CD4-positive, alpha-beta T cell (primary cell): ENCODE measurements at regions of chr1 and their contacts with region 1.

Region 1: DNA sequence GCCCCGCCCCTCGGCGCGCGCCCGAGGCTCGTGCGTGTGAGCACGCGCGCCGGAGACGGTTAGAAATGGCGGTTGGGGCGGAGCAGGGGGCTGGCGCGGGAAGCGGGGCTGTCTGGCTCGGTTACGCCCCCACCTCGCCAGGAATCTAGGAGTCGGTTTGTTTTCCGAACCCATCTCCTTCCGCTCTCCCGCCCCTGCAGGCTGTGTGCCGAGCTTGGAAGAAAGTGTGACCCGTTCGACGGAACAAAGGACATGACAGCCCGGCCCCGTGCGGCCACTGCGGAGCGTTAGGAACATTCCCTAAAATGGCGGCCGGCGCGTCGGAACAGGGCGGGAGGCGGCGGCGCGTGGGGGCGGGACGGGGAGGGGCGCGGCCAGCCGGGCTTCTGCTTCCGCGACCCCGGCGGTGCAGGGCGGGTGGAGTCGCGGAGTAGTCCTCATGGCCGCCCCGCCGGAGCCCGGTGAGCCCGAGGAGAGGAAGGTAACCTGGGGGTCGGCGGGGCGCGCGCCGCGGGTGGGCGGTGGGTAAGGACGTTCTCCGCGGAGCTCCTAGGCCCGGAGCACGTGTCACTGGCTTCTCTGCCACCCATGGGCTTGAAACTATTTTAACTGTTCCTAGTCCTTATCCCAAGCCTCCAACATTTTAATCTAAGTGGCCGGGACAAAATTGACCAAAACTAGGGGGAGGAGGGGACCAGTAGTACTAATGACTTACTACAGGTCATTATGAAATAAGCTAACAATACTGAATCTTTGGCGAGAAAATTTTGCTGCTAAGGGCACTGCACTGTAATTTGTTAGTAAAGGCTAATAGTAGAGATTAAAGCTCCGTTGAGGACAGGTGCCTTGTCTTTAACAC is at the start of gene COX20:
- DNase-seq: peak; percentile 79 to 95 (median 87)
- ATAC-seq: peak; percentile 55
- H3K4me3 ChIP-seq: peak within 1 kb of the TSS; percentile 87
- H3K4me3 Mint-ChIP-seq: peak within 1 kb of the TSS; percentile 98
- H3K27ac ChIP-seq: peak within 1 kb of the TSS; percentile 97 to 98
- H3K27ac Mint-ChIP-seq: peak within 1 kb of the TSS; percentile 99
- H3K4me1 ChIP-seq: peaks cover 18% of the 10 kb centered on the region
- H3K4me1 Mint-ChIP-seq: peaks cover 53% of the 10 kb centered on the region
- H3K27me3 ChIP-seq: no peaks in the 10 kb centered on the region
- H3K27me3 Mint-ChIP-seq: no peaks in the 10 kb centered on the region
- CTCF ChIP-seq: no peak
- total RNA-seq, gene COX20: 14.5 to 16.8 TPM

Region 2: DNA sequence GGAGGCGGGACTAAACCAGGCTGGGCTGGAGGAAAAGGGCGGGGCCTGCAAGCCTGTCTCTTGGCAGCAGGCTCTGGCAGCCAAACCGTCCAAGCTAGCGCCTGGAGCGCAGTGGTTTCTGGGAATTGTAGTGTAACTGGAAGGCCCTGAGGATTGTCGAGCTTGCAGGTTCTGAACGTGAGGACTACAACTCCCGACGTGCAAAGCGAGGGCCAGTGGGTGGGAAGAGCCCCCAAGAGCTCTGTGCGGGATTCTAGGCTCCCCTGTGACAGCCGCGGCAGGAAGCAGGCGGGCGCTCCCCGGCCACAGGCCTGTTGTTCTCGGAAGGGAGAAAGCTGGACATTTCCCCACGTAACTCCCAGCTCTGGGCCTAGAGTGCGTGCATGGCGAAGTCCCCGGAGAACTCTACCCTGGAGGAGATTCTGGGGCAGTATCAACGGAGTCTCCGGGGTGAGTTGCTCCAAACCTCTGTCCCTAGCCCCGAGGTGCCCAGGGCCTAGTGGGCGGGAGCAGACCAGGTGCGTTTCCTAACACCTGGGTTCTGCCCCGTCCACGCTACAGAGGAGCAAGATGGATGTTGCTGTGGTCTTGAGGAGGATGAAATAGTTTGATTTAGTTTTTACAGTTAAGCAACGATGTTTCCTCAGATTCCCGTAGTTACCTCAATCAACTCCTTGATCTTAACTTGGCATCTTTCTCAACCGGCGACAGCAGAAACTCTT is 1579.6 kb before region 1 on chr1 and contains the start of gene SDCCAG8:
- CTCF ChIA-PET with region 1: no interaction called
- POLR2A ChIA-PET with region 1: interaction called, 22 read pairs
- intact Hi-C with region 1: loop called in 1 of 2 experiments (anchors 10 kb)
- DNase-seq: peak; percentile 85 to 98 (median 90)
- ATAC-seq: peak; percentile 73
- H3K4me3 ChIP-seq: peak within 1 kb of the TSS; percentile 99
- H3K4me3 Mint-ChIP-seq: peak within 1 kb of the TSS; percentile 98
- H3K27ac ChIP-seq: peak within 1 kb of the TSS; percentile 97 to 99
- H3K27ac Mint-ChIP-seq: peak within 1 kb of the TSS; percentile 100
- H3K4me1 ChIP-seq: peaks cover 20% of the 10 kb centered on the region
- H3K4me1 Mint-ChIP-seq: peaks cover 61% of the 10 kb centered on the region
- H3K27me3 ChIP-seq: no peaks in the 10 kb centered on the region
- H3K27me3 Mint-ChIP-seq: no peaks in the 10 kb centered on the region
- CTCF ChIP-seq: no peak
- total RNA-seq, gene SDCCAG8: 18.3 to 21.2 TPM

Region 3: GRCh38 chr1:244451951-244452795 is 383.3 kb before region 1 on chr1:
- CTCF ChIA-PET with region 1: no interaction called
- POLR2A ChIA-PET with region 1: interaction called, 9 read pairs
- intact Hi-C with region 1: loop called in 1 of 2 experiments (anchors 10 kb)
- DNase-seq: peak; percentile 97 to 100 (median 99)
- ATAC-seq: peak; percentile 83
- H3K4me3 ChIP-seq: peak overlapping the region; percentile 86
- H3K4me3 Mint-ChIP-seq: peak overlapping the region; percentile 93
- H3K27ac ChIP-seq: peak overlapping the region; percentile 16 to 96
- H3K27ac Mint-ChIP-seq: peak overlapping the region; percentile 98
- H3K4me1 ChIP-seq: peaks cover 15% of the 10 kb centered on the region
- H3K4me1 Mint-ChIP-seq: peaks cover 42% of the 10 kb centered on the region
- H3K27me3 ChIP-seq: no peaks in the 10 kb centered on the region
- H3K27me3 Mint-ChIP-seq: no peaks in the 10 kb centered on the region
- CTCF ChIP-seq: peak; percentile 45

Region 4: GRCh38 chr1:244652699-244653466 is 182.6 kb before region 1 on chr1 and contains the start of gene DESI2:
- CTCF ChIA-PET with region 1: no interaction called
- POLR2A ChIA-PET with region 1: interaction called, 39 read pairs
- intact Hi-C with region 1: loop called (anchors 1 to 5 kb)
- DNase-seq: peak; percentile 95 to 100 (median 97)
- ATAC-seq: peak; percentile 92
- H3K4me3 ChIP-seq: peak within 1 kb of the TSS; percentile 80
- H3K4me3 Mint-ChIP-seq: peak within 1 kb of the TSS; percentile 88
- H3K27ac ChIP-seq: peak within 1 kb of the TSS; percentile 53 to 74
- H3K27ac Mint-ChIP-seq: peak within 1 kb of the TSS; percentile 83
- H3K4me1 ChIP-seq: peaks cover 23% of the 10 kb centered on the region
- H3K4me1 Mint-ChIP-seq: peaks cover 21% of the 10 kb centered on the region
- H3K27me3 ChIP-seq: no peaks in the 10 kb centered on the region
- H3K27me3 Mint-ChIP-seq: no peaks in the 10 kb centered on the region
- CTCF ChIP-seq: peak; percentile 46
- total RNA-seq, gene DESI2: 12.9 to 13.7 TPM

Region 5: DNA sequence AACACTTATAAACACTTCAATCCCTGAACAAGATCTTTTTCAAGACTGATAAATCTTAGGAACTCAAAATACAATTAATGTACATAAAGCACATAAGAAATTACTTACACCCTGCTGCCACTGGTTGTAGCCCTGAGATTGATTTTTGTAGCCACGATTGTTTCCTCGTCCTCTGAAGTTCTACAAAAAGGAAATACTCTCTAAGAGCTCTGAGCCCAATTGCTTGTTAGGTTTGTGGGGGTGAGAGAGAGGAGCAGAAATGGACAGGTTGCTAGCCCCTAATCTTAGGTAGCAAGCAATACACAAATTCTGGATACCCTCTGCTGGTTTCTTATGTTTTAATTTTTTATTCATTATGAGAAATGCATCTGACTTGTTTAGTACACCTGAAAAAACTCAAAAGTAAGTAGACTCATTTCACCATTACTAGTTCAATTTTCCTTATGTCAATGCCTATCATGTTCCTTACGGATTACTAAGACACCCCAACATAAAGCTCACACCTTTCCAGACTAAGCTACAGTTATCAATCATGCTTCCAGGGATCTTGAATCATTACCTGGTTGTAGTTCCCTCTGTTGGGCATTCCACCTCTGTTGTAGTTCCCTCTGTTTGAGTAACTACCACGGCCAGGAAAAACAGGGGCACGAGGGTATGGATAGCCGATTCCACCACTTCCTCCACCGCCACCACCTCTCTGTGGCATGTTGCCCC is 19.5 kb after region 1 on chr1:
- CTCF ChIA-PET with region 1: interaction called, 14 read pairs
- POLR2A ChIA-PET with region 1: interaction called, 1,262 read pairs
- intact Hi-C with region 1: no loop called
- DNase-seq: peak in 1 of 14 experiments; percentile 29
- ATAC-seq: peak; percentile 31
- H3K4me3 ChIP-seq: no peak overlapping the region
- H3K4me3 Mint-ChIP-seq: peak overlapping the region; percentile 40
- H3K27ac ChIP-seq: peak overlapping the region; percentile 13 to 50
- H3K27ac Mint-ChIP-seq: peak overlapping the region; percentile 78
- H3K4me1 ChIP-seq: peaks cover 30% of the 10 kb centered on the region
- H3K4me1 Mint-ChIP-seq: peaks cover 99% of the 10 kb centered on the region
- H3K27me3 ChIP-seq: no peaks in the 10 kb centered on the region
- H3K27me3 Mint-ChIP-seq: no peaks in the 10 kb centered on the region
- CTCF ChIP-seq: no peak

Region 6: GRCh38 chr1:244918421-244919319 is 83.2 kb after region 1 on chr1:
- CTCF ChIA-PET with region 1: interaction called, 3 read pairs
- POLR2A ChIA-PET with region 1: interaction called, 26 read pairs
- intact Hi-C with region 1: loop called (anchors 1 to 2 kb)
- DNase-seq: peak; percentile 22 to 91 (median 66)
- ATAC-seq: peak; percentile 98
- H3K4me3 ChIP-seq: peak overlapping the region; percentile 55
- H3K4me3 Mint-ChIP-seq: peak overlapping the region; percentile 90
- H3K27ac ChIP-seq: no peak overlapping the region
- H3K27ac Mint-ChIP-seq: peak overlapping the region; percentile 56
- H3K4me1 ChIP-seq: peaks cover 7% of the 10 kb centered on the region
- H3K4me1 Mint-ChIP-seq: peaks cover 10% of the 10 kb centered on the region
- H3K27me3 ChIP-seq: no peaks in the 10 kb centered on the region
- H3K27me3 Mint-ChIP-seq: peaks cover 16% of the 10 kb centered on the region
- CTCF ChIP-seq: no peak

Region 7: DNA sequence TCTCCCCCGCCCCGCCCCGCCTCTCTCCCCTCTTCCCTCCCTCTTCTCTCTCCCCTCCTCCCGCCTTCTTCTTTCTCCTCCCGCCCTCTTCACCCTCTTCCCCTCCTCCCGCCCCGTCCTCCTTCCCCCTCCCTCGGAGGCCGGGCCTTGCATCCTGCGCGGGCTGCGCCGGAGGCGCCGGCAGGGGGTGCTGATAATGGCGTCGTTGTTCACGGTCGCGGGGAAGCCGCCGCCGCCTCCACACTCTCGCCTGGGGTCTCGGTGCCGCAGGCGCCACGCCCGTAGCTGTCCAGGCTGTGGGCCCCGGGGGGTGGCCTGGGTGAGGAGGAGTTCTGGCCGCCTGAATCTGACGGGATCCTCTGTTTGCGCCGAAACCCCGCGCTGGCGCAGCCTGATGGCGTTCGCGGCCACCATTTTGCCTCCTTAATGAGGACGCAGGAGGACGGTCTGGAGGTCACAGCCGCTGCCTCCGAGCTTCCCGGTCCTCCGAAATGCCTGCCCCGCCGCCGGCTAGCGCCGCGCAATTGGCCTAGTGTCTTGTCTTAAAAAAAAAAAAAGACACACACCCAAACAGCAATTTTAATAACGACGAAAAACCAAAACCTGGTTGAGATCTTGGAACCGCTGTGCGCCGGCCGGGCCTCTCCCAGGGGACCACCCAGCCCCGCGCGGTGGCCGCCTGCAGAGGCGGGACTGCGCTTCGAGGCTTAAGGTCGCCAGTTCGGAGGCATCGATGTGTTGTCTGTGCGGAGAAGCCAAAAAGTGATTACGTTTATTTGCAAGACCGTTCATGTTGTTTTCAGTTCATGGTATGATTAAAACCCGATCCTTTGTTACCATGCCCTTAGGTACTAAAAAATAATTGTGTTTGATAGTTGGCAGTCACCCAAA is 135.4 kb after region 1 on chr1:
- CTCF ChIA-PET with region 1: interaction called, 12 read pairs
- POLR2A ChIA-PET with region 1: interaction called, 274 read pairs
- intact Hi-C with region 1: loop called (anchors 1 kb)
- DNase-seq: peak; percentile 91 to 97 (median 93)
- ATAC-seq: peak; percentile 75
- H3K4me3 ChIP-seq: peak overlapping the region; percentile 86
- H3K4me3 Mint-ChIP-seq: peak overlapping the region; percentile 91
- H3K27ac ChIP-seq: peak overlapping the region; percentile 99 to 100
- H3K27ac Mint-ChIP-seq: peak overlapping the region; percentile 100
- H3K4me1 ChIP-seq: peaks cover 6% of the 10 kb centered on the region
- H3K4me1 Mint-ChIP-seq: peaks cover 30% of the 10 kb centered on the region
- H3K27me3 ChIP-seq: no peaks in the 10 kb centered on the region
- H3K27me3 Mint-ChIP-seq: no peaks in the 10 kb centered on the region
- CTCF ChIP-seq: peak; percentile 52